Mammary epithelial cell (primary cell): ENCODE measurements at regions of chr2 and their contacts with region 1.

Region 1: DNA sequence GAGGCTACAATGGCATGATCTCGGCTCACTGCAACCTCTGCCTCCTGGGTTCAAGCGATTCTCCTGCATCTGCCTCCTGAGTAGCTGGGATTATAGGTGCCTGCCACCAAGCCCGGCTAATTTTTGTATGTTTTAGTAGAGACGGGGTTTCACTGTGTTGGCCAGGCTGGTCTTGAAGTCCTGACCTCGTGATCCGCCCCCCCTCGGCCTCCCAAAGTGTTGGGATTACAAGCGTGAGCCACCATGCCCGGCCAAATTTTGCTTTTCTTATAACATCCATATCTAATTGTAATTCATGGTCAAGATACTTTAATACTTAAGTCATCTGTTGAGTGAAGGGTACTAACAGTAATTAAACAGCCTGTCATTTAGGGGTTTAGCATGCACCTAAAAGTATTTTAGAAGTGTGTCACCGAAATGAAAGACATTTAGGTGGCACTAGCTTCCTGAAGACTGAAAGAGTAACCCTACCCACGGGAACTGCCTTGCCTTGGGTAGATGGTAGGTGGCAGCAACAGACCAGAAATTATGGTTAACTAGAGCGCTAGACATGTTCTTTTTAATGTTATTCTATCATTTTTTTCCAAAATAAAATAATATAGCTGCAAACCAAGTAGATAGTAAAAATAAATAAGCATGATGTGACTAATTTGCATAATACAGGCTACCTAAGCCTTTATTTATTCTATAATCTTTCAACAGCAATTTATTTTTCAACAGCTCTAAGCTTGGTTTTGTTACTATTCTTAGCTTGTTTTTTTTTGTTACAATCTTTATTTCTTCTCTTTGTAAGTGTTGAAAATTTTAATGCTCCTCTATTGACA is 8.6 kb upstream of the ACYP2 start:
- DNase-seq: peak; percentile 43
- H3K4me3 ChIP-seq: no peak overlapping the region
- H3K27ac ChIP-seq: no peak overlapping the region
- H3K4me1 ChIP-seq: peaks cover 33% of the 10 kb centered on the region
- H3K27me3 ChIP-seq: no peaks in the 10 kb centered on the region
- CTCF ChIP-seq: peak; percentile 84 to 90

Region 2: GRCh38 chr2:53969968-53970723 is 136.7 kb before region 1 on chr2:
- CTCF ChIA-PET with region 1: interaction called, 5 read pairs
- dilution Hi-C with region 1: no loop called
- in situ Hi-C with region 1: no loop called
- intact Hi-C with region 1: loop called (anchors 5 kb)
- DNase-seq: peak; percentile 57
- H3K4me3 ChIP-seq: peak overlapping the region; percentile 82 to 97 (median 96)
- H3K27ac ChIP-seq: peak overlapping the region; percentile 93
- H3K4me1 ChIP-seq: peaks cover 15% of the 10 kb centered on the region
- H3K27me3 ChIP-seq: no peaks in the 10 kb centered on the region
- CTCF ChIP-seq: no peak

Region 3: DNA sequence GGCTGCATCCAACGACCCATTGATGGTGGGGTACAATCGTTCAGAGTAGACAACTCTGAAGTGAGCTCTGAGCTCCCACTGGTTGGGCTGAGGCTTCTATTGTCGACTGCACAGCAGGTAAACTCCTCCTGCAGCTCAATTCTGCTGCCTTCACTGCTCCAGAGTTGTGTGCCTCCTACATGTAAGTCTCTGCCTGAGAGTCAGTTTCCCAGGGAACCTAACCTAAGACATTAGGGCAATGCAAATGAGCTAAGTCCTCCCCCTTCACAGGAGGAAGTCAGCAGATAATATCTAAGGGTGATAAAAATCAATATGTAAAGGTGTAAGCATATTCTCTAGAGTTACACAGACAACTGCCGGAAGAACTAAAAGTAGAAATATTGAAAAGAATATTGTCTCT is 13.9 kb before region 1 on chr2:
- CTCF ChIA-PET with region 1: no interaction called
- dilution Hi-C with region 1: no loop called
- in situ Hi-C with region 1: no loop called
- intact Hi-C with region 1: no loop called
- DNase-seq: no peak
- H3K4me3 ChIP-seq: no peak overlapping the region
- H3K27ac ChIP-seq: no peak overlapping the region
- H3K4me1 ChIP-seq: peaks cover 7% of the 10 kb centered on the region
- H3K27me3 ChIP-seq: no peaks in the 10 kb centered on the region
- CTCF ChIP-seq: no peak

Region 4: GRCh38 chr2:54139210-54139609 is 32.4 kb after region 1 on chr2:
- CTCF ChIA-PET with region 1: no interaction called
- dilution Hi-C with region 1: no loop called
- in situ Hi-C with region 1: no loop called
- intact Hi-C with region 1: no loop called
- DNase-seq: no peak
- H3K4me3 ChIP-seq: no peak overlapping the region
- H3K27ac ChIP-seq: no peak overlapping the region
- H3K4me1 ChIP-seq: no peaks in the 10 kb centered on the region
- H3K27me3 ChIP-seq: no peaks in the 10 kb centered on the region
- CTCF ChIP-seq: no peak

Region 5: DNA sequence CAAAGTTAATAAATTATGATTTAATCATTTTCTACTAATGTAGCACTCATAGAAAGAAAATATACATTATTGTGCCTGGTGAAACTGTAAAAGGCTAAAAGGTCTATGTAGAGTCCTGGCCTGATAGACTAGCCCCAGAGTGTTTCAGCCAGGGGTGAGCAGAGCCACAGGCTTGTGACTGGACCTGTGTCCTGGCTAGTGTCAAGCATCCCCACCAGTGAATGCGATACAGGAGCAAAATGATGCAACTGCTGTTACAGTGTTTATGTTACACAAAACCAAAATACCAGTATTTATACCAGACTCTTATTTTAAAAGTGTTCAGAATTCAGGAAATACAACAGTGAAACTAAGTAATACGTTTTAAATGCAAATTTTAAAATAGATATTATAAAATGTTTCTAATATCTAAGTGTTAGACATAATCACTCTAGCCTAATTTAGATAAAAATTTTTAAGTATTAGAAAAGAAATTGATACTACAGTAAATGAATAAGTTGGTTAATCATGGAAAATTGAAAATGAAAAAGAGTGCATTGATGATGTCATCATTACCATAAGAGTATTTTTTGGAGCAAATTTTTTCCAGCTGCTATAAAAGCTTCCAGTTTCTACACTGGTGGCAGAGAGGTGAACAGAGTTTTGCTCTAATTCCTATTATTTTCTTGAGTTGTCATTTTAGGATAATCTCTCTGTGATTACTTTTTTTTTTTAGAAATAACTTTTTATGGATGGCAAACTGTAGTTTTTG is 155.3 kb after region 1 on chr2:
- CTCF ChIA-PET with region 1: interaction called, 12 read pairs
- dilution Hi-C with region 1: no loop called
- in situ Hi-C with region 1: no loop called
- intact Hi-C with region 1: no loop called
- DNase-seq: no peak
- H3K4me3 ChIP-seq: no peak overlapping the region
- H3K27ac ChIP-seq: no peak overlapping the region
- H3K4me1 ChIP-seq: no peaks in the 10 kb centered on the region
- H3K27me3 ChIP-seq: no peaks in the 10 kb centered on the region
- CTCF ChIP-seq: no peak

Region 6: GRCh38 chr2:54558188-54559005 is 451.6 kb after region 1 on chr2:
- CTCF ChIA-PET with region 1: no interaction called
- dilution Hi-C with region 1: no loop called
- in situ Hi-C with region 1: no loop called
- intact Hi-C with region 1: loop called (anchors 1 kb)
- DNase-seq: peak; percentile 79
- H3K4me3 ChIP-seq: peak overlapping the region; percentile 75 to 87 (median 80)
- H3K27ac ChIP-seq: peak overlapping the region; percentile 97
- H3K4me1 ChIP-seq: peaks cover 41% of the 10 kb centered on the region
- H3K27me3 ChIP-seq: no peaks in the 10 kb centered on the region
- CTCF ChIP-seq: no peak

Region 7: DNA sequence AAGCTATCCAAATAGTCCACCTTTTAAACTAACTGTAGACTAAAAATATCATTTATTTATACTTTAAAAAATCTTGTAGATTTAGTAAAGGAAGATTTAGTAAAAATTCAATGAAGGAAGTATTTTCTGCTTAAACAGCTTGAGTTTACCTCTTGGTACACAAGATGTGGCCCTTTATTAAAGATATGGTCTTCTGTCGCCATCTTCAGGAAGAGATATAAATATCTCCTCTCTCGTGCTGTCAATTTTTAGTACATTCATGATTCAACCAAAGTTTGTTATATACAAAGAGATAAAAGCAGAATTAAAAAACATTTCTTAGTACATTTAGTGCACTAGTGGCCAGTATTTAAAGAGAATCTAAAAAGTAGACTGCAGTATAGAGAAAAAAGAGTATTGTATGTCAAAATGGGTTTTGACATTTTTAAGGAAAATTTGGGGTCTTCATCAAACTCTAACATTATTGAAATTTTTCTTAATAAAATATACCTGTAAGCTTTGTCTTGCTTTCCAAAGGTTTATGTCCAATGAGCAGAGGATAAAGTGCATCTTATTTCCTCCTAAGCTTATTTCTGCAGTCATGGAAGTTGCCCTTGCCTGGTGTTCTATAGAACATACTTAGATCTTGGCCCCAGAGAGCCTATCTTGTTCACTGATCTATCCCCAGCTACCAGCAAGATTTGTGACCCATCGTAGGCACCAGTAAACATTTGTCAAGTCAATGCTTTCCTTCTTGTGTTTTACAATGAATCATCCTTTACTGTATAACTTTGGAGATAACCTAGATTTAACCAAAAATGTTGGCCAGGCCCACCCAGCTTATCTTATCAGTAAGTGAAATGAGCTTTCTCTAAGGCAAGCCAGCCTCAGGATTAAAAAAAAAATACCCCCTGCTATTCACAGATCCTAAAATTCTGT is 598.1 kb after region 1 on chr2:
- CTCF ChIA-PET with region 1: interaction called, 3 read pairs
- dilution Hi-C with region 1: no loop called
- in situ Hi-C with region 1: loop called in 1 of 2 experiments (anchors 10 kb)
- intact Hi-C with region 1: loop called (anchors 1 kb)
- DNase-seq: peak; percentile 40
- H3K4me3 ChIP-seq: no peak overlapping the region
- H3K27ac ChIP-seq: no peak overlapping the region
- H3K4me1 ChIP-seq: peaks cover 11% of the 10 kb centered on the region
- H3K27me3 ChIP-seq: no peaks in the 10 kb centered on the region
- CTCF ChIP-seq: peak; percentile 35 to 57